Activated B cell treated with CpG ODN at 0.5 μM for 24 hours (primary cell): ENCODE measurements at regions of chr6 and their contacts with region 1.

Region 1: DNA sequence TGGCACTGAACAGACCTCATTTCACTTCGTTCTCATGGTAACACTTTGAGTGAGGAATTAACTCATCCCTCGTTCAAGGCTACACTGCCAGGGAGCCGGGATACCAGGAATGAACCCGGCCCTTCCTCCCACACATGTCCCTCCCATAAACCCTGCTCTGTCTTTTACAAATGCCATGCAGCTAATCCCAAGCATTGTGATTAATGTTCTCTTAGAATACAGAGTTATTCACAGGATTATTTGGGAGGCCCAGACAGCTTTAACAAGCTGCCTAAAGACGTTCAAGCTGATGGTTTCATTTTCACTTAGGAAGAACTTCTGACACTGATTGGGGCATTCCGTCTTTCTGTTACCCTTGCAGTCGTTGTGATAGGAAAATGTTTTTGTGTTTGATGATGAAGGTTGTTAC is 42.5 kb upstream of the CD83 start:
- DNase-seq: no peak
- ATAC-seq: peak; percentile 73
- H3K4me3 Mint-ChIP-seq: peak overlapping the region; percentile 81
- H3K27ac Mint-ChIP-seq: peak overlapping the region; percentile 95
- H3K4me1 Mint-ChIP-seq: peaks cover 75% of the 10 kb centered on the region
- H3K27me3 Mint-ChIP-seq: no peaks in the 10 kb centered on the region
- CTCF ChIP-seq: no peak

Region 2: DNA sequence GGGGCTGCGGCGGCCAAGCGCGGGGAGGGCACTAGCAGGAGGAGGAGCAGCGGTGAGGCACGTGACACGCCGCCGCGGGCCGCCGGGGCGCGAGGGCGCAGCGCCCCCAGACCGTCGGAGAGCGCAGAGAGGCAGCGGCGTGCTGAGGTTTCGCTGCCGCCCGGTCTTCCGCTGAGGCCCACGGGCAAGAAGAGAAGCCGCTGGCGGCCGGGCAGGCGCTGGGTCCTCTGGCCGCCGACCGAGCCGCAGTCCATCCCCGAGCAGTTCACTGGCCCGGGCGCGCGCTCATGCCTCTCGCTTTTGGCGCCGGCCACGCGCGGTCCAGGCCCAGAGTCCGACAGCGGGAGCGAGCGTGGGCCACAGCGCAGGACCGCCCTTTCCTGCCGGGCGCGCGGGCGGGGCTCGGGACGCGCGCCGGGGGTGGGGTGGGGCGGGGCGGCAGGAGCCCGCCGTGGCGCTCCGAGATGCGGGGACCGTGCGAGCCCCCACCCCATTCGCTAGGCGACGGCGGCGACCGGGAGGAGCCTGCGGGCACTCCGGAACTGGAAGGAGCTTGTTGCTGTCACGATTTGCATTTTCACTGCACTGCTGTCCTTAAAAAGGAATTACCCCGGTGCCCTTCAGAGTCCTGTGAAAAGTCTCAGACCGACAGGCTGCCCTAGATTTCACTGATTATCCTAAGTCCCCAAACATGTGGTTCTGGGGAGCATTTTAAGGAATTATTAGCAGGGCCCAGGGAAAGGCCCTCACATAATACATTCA is 260.7 kb before region 1 on chr6 and contains the start of gene MCUR1:
- CTCF ChIA-PET with region 1: no interaction called
- POLR2A ChIA-PET with region 1: interaction called, 3 read pairs
- intact Hi-C with region 1: loop called (anchors 5 kb)
- DNase-seq: peak; percentile 81
- ATAC-seq: peak; percentile 83
- H3K4me3 Mint-ChIP-seq: peak within 1 kb of the TSS; percentile 91
- H3K27ac Mint-ChIP-seq: peak within 1 kb of the TSS; percentile 87
- H3K4me1 Mint-ChIP-seq: peaks cover 32% of the 10 kb centered on the region
- H3K27me3 Mint-ChIP-seq: no peaks in the 10 kb centered on the region
- CTCF ChIP-seq: no peak
- total RNA-seq, gene MCUR1: 13.6 and 14.1 TPM in 2 replicates

Region 3: GRCh38 chr6:14095437-14095836 is 20.3 kb after region 1 on chr6:
- CTCF ChIA-PET with region 1: interaction called, 8 read pairs
- POLR2A ChIA-PET with region 1: interaction called, 349 read pairs
- intact Hi-C with region 1: loop called (anchors 1 kb)
- DNase-seq: peak; percentile 72
- ATAC-seq: peak; percentile 73
- H3K4me3 Mint-ChIP-seq: peak overlapping the region; percentile 85
- H3K27ac Mint-ChIP-seq: peak overlapping the region; percentile 100
- H3K4me1 Mint-ChIP-seq: peaks cover 96% of the 10 kb centered on the region
- H3K27me3 Mint-ChIP-seq: no peaks in the 10 kb centered on the region
- CTCF ChIP-seq: no peak

Region 4: GRCh38 chr6:14117158-14118090 is 42.3 kb after region 1 on chr6 and contains the start of gene CD83:
- CTCF ChIA-PET with region 1: interaction called, 5 read pairs
- POLR2A ChIA-PET with region 1: interaction called, 190 read pairs
- intact Hi-C with region 1: loop called (anchors 1 kb)
- DNase-seq: peak; percentile 91
- ATAC-seq: peak; percentile 72
- H3K4me3 Mint-ChIP-seq: peak within 1 kb of the TSS; percentile 95
- H3K27ac Mint-ChIP-seq: peak within 1 kb of the TSS; percentile 94
- H3K4me1 Mint-ChIP-seq: peaks cover 47% of the 10 kb centered on the region
- H3K27me3 Mint-ChIP-seq: no peaks in the 10 kb centered on the region
- CTCF ChIP-seq: no peak
- total RNA-seq, gene CD83: 483 and 492 TPM in 2 replicates

Region 5: GRCh38 chr6:14129575-14129974 is 54.5 kb after region 1 on chr6:
- CTCF ChIA-PET with region 1: interaction called, 3 read pairs
- POLR2A ChIA-PET with region 1: interaction called, 37 read pairs
- intact Hi-C with region 1: no loop called
- DNase-seq: no peak
- ATAC-seq: peak; percentile 19
- H3K4me3 Mint-ChIP-seq: peak overlapping the region; percentile 79
- H3K27ac Mint-ChIP-seq: peak overlapping the region; percentile 46
- H3K4me1 Mint-ChIP-seq: peaks cover 100% of the 10 kb centered on the region
- H3K27me3 Mint-ChIP-seq: no peaks in the 10 kb centered on the region
- CTCF ChIP-seq: no peak